Colonic mucosa (tissue), 4 donors: ENCODE measurements at regions of chr14 and their contacts with region 1.

Region 1: GRCh38 chr14:65958664-65959562 is 527.3 kb upstream of the CCDC196 start:
- DNase-seq: peak; percentile 22
- H3K4me3 ChIP-seq: no peak overlapping the region
- H3K27ac ChIP-seq: no peak overlapping the region
- H3K4me1 ChIP-seq: no peaks in the 10 kb centered on the region
- H3K27me3 ChIP-seq: no peaks in the 10 kb centered on the region
- CTCF ChIP-seq: peak; percentile 33

Region 2: GRCh38 chr14:65164068-65164824 is 794.7 kb before region 1 on chr14:
- intact Hi-C with region 1: loop called (anchors 2 kb)
- DNase-seq: peak; percentile 34
- H3K4me3 ChIP-seq: no peak overlapping the region
- H3K27ac ChIP-seq: no peak overlapping the region
- H3K4me1 ChIP-seq: no peaks in the 10 kb centered on the region
- H3K27me3 ChIP-seq: no peaks in the 10 kb centered on the region
- CTCF ChIP-seq: peak; percentile 43

Region 3: GRCh38 chr14:66070509-66071319 is 111.8 kb after region 1 on chr14:
- intact Hi-C with region 1: loop called (anchors 1 kb)
- DNase-seq: peak; percentile 70
- H3K4me3 ChIP-seq: no peak overlapping the region
- H3K27ac ChIP-seq: no peak overlapping the region
- H3K4me1 ChIP-seq: no peaks in the 10 kb centered on the region
- H3K27me3 ChIP-seq: no peaks in the 10 kb centered on the region
- CTCF ChIP-seq: peak; percentile 84